MCF 10A (cell line): ENCODE measurements at regions of chr3 and their contacts with region 1.

Region 1: GRCh38 chr3:87350364-87351199 is 74.2 kb upstream of the POU1F1 start:
- DNase-seq: peak; percentile 66
- H3K4me3 Mint-ChIP-seq: no peak overlapping the region
- H3K27ac Mint-ChIP-seq: no peak overlapping the region
- H3K4me1 Mint-ChIP-seq: no peaks in the 10 kb centered on the region
- H3K27me3 Mint-ChIP-seq: no peaks in the 10 kb centered on the region
- CTCF ChIP-seq: peak; percentile 72

Region 2: GRCh38 chr3:87287011-87287410 is 63.6 kb before region 1 on chr3:
- CTCF ChIA-PET with region 1: interaction called, 12 read pairs
- POLR2A ChIA-PET with region 1: no interaction called
- intact Hi-C with region 1: no loop called
- DNase-seq: peak; percentile 6
- H3K4me3 Mint-ChIP-seq: no peak overlapping the region
- H3K27ac Mint-ChIP-seq: no peak overlapping the region
- H3K4me1 Mint-ChIP-seq: no peaks in the 10 kb centered on the region
- H3K27me3 Mint-ChIP-seq: no peaks in the 10 kb centered on the region
- CTCF ChIP-seq: no peak

Region 3: DNA sequence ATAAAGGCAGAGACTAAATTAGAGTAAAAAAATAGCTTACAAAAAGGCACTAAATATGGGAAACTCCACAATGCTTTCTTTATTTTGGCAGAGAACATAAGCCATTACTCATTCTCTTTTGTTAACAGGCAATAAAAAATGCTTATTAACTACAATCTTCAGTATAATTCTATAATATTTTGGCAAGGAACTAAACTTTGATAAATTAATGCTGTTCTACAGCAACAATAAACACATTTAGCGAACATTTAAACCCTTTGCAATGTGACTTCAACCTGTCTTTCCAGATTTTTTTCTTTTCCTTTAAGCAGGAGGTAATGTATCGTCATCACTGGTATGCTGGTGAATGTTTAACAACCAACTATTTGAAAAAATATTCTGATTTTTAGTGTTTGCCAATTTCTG is 32.0 kb before region 1 on chr3:
- CTCF ChIA-PET with region 1: interaction called, 18 read pairs
- POLR2A ChIA-PET with region 1: no interaction called
- intact Hi-C with region 1: no loop called
- DNase-seq: no peak
- H3K4me3 Mint-ChIP-seq: no peak overlapping the region
- H3K27ac Mint-ChIP-seq: no peak overlapping the region
- H3K4me1 Mint-ChIP-seq: peaks cover 6% of the 10 kb centered on the region
- H3K27me3 Mint-ChIP-seq: no peaks in the 10 kb centered on the region
- CTCF ChIP-seq: no peak

Region 4: DNA sequence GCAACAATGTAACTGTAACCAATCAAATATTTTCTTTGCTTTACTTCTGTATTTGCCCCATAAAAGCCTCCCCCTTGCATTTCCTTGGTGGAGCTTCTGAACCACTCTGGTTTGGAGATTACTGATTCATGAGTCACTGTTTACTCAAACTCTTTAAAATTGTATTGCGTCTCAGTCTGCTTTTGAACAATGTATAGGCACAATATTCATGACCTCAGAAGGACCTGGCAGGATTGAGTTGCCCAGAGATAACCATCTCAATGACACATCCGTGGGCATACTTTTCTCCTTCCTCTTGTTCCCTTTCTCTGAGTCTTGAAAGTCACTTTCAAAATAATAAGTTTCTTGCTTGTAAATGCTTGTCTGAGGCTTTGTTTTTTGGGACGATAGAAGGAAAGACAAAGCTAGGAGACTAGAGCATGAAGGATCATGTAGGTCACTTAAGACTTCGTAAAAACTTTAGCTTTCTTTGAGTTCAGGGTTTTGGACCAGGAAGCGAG is 17.1 kb before region 1 on chr3:
- CTCF ChIA-PET with region 1: interaction called, 16 read pairs
- POLR2A ChIA-PET with region 1: no interaction called
- intact Hi-C with region 1: no loop called
- DNase-seq: peak; percentile 89
- H3K4me3 Mint-ChIP-seq: peak overlapping the region; percentile 30
- H3K27ac Mint-ChIP-seq: peak overlapping the region; percentile 92
- H3K4me1 Mint-ChIP-seq: peaks cover 18% of the 10 kb centered on the region
- H3K27me3 Mint-ChIP-seq: no peaks in the 10 kb centered on the region
- CTCF ChIP-seq: no peak

Region 5: DNA sequence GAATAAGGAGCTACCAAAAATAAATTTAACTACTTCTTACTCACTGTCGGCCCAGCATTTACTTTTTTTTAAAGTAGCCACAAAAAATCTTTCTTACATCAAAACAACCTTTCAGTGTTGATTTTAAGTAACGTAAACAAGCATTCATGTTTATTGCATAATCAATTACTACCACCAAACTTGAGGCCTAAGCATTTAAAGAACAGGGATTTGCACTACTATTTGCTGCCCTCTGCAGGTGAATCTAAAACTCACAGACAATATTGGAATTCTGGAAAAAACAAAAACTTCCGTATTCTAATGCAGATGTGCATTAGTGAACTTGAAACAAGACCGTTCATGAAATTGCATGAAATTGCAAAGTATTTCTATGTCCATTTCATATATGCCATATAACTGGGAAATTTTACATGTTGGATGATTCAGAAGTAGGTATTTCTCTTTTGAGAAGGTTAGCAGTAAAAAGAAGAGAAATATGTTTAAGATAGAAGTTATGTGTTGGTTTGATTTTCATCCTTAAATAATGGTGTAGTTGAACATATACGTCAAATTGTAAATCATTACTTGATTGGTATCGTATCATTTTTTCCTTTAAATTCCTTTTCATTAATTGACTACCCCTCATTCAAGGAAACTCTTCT is 652.7 kb after region 1 on chr3:
- CTCF ChIA-PET with region 1: interaction called, 24 read pairs
- POLR2A ChIA-PET with region 1: no interaction called
- intact Hi-C with region 1: loop called (anchors 2 kb)
- DNase-seq: peak; percentile 68
- H3K4me3 Mint-ChIP-seq: no peak overlapping the region
- H3K27ac Mint-ChIP-seq: no peak overlapping the region
- H3K4me1 Mint-ChIP-seq: no peaks in the 10 kb centered on the region
- H3K27me3 Mint-ChIP-seq: no peaks in the 10 kb centered on the region
- CTCF ChIP-seq: peak; percentile 69